Testis (tissue), 5 donors: ENCODE measurements at regions of chr3 and their contacts with region 1.

Region 1: DNA sequence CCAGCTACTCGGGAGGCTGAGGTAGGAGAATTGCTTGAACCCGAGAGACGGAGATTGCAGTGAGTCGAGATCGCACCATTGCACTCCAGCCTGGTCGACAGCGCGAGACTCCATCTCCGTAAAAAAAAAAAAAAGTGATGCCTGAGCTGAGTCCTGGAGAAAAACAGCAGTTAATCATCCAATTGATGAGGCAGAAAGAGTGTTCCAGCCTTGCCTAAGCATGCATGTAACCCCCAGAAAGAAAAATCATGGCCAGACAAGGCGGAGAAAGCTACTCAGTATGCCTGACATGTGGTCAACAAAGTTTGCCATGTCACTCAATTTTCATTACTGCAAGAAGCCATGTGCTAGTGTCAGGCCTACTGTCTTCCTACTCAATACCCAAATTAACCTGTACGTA is 593.1 kb upstream of the MDFIC2 start:
- DNase-seq: no peak
- H3K4me3 ChIP-seq: no peak overlapping the region
- H3K27ac ChIP-seq: no peak overlapping the region
- H3K4me1 ChIP-seq: no peaks in the 10 kb centered on the region
- H3K27me3 ChIP-seq: no peaks in the 10 kb centered on the region
- CTCF ChIP-seq: no peak
- POLR2A ChIP-seq: no peak

Region 2: DNA sequence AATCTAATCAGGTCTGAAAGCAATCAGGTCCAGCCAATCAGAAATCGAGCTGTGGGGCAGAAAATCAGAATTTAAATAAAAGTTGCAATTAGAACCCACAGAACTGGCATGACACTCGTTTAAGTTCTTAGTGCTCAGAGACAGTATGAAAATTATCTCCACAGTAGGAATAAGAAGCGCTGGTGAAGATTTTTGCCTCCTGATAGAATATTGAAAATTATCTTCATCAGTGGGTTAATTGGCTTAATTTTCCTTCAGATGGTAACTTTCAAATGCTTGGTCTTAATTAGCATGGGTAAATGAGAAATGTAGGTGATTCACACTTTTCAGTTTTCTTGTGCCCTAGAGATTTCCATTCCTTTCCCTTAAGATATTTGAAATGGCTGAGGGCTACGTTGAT is 484.0 kb before region 1 on chr3:
- intact Hi-C with region 1: loop called (anchors 10 kb)
- DNase-seq: no peak
- H3K4me3 ChIP-seq: no peak overlapping the region
- H3K27ac ChIP-seq: no peak overlapping the region
- H3K4me1 ChIP-seq: no peaks in the 10 kb centered on the region
- H3K27me3 ChIP-seq: no peaks in the 10 kb centered on the region
- CTCF ChIP-seq: no peak
- POLR2A ChIP-seq: no peak

Region 3: GRCh38 chr3:70849911-70850699 is 55.4 kb before region 1 on chr3:
- intact Hi-C with region 1: no loop called
- DNase-seq: no peak
- H3K4me3 ChIP-seq: no peak overlapping the region
- H3K27ac ChIP-seq: no peak overlapping the region
- H3K4me1 ChIP-seq: no peaks in the 10 kb centered on the region
- H3K27me3 ChIP-seq: no peaks in the 10 kb centered on the region
- CTCF ChIP-seq: no peak
- POLR2A ChIP-seq: no peak

Region 4: DNA sequence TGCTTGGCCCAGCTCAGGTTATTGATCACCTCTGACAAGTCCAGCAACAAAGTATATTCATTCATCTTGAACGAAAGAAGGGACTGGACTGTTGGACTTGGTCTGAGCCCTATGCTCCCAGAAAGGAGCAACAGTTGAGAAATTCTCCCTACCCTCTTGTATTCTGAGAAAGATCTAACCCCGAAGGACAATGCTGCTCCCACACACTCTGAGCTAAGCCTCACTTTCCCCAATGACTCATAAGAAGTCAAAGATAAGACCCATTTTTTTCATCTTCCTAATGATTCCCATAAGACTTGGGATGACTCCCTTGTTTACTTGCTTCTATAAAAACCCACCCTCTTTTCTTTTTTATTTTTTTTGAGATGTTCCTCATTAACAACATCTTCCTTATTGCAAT is 43.6 kb before region 1 on chr3:
- intact Hi-C with region 1: no loop called
- DNase-seq: no peak
- H3K4me3 ChIP-seq: no peak overlapping the region
- H3K27ac ChIP-seq: no peak overlapping the region
- H3K4me1 ChIP-seq: no peaks in the 10 kb centered on the region
- H3K27me3 ChIP-seq: no peaks in the 10 kb centered on the region
- CTCF ChIP-seq: no peak
- POLR2A ChIP-seq: no peak

Region 5: GRCh38 chr3:70989174-70989573 is 83.7 kb after region 1 on chr3:
- intact Hi-C with region 1: no loop called
- DNase-seq: no peak
- H3K4me3 ChIP-seq: no peak overlapping the region
- H3K27ac ChIP-seq: peak overlapping the region in 1 of 2 donors; percentile 26
- H3K4me1 ChIP-seq: no peaks in the 10 kb centered on the region
- H3K27me3 ChIP-seq: no peaks in the 10 kb centered on the region
- CTCF ChIP-seq: no peak
- POLR2A ChIP-seq: no peak